Activated B cell treated with CpG ODN at 0.5 μM for 24 hours (primary cell): ENCODE measurements at regions of chrX and their contacts with region 1.

Region 1: GRCh38 chrX:129781134-129781672 is 1.5 kb downstream of the SASH3 start:
- DNase-seq: peak; percentile 49
- ATAC-seq: peak; percentile 73
- H3K4me3 Mint-ChIP-seq: peak overlapping the region; percentile 93
- H3K27ac Mint-ChIP-seq: peak overlapping the region; percentile 96
- H3K4me1 Mint-ChIP-seq: peaks cover 76% of the 10 kb centered on the region
- H3K27me3 Mint-ChIP-seq: no peaks in the 10 kb centered on the region
- CTCF ChIP-seq: no peak

Region 2: DNA sequence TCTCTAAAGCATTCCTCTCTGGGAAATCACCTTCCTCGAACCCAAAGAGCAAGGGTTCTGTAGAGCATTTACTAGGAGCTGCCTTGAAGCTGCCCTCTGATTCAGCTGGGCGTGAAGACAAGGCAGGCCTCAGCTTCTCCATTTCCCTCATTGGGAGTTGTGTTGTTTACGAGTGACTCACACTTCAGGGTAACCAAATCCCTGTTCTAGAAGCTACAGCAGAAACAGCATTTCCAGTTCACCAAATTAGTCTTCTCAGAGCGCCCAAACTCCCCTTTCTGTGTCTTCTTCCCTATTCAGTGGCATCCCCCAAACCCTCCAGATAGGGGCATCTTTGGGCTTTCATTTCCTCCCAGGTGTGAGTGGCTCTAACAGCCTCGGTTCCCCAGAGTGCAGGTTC is 43.3 kb before region 1 on chrX:
- CTCF ChIA-PET with region 1: interaction called, 3 read pairs
- POLR2A ChIA-PET with region 1: interaction called, 48 read pairs
- intact Hi-C with region 1: loop called (anchors 2 kb)
- DNase-seq: no peak
- ATAC-seq: peak; percentile 79
- H3K4me3 Mint-ChIP-seq: no peak overlapping the region
- H3K27ac Mint-ChIP-seq: peak overlapping the region; percentile 63
- H3K4me1 Mint-ChIP-seq: peaks cover 36% of the 10 kb centered on the region
- H3K27me3 Mint-ChIP-seq: no peaks in the 10 kb centered on the region
- CTCF ChIP-seq: no peak

Region 3: GRCh38 chrX:129759576-129760061 is 21.6 kb before region 1 on chrX:
- CTCF ChIA-PET with region 1: interaction called, 10 read pairs
- POLR2A ChIA-PET with region 1: interaction called, 261 read pairs
- intact Hi-C with region 1: loop called (anchors 1 kb)
- DNase-seq: no peak
- ATAC-seq: peak; percentile 28
- H3K4me3 Mint-ChIP-seq: no peak overlapping the region
- H3K27ac Mint-ChIP-seq: peak overlapping the region; percentile 85
- H3K4me1 Mint-ChIP-seq: peaks cover 58% of the 10 kb centered on the region
- H3K27me3 Mint-ChIP-seq: no peaks in the 10 kb centered on the region
- CTCF ChIP-seq: no peak

Region 4: DNA sequence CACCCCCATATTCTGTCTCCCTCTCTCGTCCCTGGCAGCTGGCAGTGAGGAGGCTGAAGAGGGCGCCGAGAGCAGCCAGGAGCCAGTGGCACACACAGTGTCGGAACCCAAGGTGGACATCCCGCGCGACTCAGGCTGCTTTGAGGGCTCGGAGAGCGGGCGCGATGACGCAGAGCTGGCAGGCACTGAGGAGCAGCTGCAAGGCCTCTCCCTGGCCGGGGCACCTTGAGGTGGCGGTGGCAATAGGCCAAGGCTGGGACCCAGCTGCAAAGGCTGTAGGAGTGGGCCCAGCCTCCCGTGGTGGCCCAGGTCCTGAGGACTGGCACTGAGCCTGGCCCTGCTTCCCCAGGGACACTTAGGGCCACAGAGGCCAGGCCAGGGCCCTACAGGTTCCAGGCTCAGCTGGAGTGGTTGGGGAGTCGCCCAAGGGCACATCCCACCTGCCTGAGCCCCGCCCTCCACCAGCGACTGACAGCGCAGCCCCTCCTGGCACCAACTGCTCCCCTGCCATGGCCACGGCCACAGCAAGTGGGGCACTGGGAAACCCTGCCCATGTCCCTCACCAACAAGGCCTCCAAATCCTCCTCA is 12.5 kb after region 1 on chrX:
- CTCF ChIA-PET with region 1: no interaction called
- POLR2A ChIA-PET with region 1: interaction called, 22 read pairs
- intact Hi-C with region 1: no loop called
- DNase-seq: no peak
- ATAC-seq: no peak
- H3K4me3 Mint-ChIP-seq: no peak overlapping the region
- H3K27ac Mint-ChIP-seq: no peak overlapping the region
- H3K4me1 Mint-ChIP-seq: peaks cover 5% of the 10 kb centered on the region
- H3K27me3 Mint-ChIP-seq: no peaks in the 10 kb centered on the region
- CTCF ChIP-seq: no peak

Region 5: DNA sequence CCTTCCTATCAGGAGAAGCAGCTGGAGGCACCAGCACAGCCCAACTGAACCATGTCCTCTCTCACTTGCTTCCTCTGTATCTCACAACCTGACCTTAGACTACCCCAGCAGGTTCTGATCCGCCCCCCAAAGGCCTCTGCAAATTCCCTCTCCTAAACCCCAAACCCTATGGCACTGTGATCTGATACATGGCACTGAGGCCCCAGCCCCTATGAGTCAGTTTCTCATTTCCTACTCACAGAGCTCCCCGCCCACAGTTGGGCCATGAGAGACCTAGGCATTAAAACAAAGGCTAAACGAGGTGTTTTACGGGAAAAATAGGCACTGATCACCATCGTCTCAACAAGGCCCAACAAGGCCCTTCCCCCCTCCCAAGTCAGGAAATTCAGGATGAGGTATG is 17.7 kb after region 1 on chrX:
- CTCF ChIA-PET with region 1: no interaction called
- POLR2A ChIA-PET with region 1: interaction called, 22 read pairs
- intact Hi-C with region 1: no loop called
- DNase-seq: no peak
- ATAC-seq: no peak
- H3K4me3 Mint-ChIP-seq: no peak overlapping the region
- H3K27ac Mint-ChIP-seq: peak overlapping the region; percentile 41
- H3K4me1 Mint-ChIP-seq: peaks cover 8% of the 10 kb centered on the region
- H3K27me3 Mint-ChIP-seq: no peaks in the 10 kb centered on the region
- CTCF ChIP-seq: no peak

Region 6: GRCh38 chrX:129843459-129844306 is 62.5 kb after region 1 on chrX and contains the start of gene ZDHHC9:
- CTCF ChIA-PET with region 1: no interaction called
- POLR2A ChIA-PET with region 1: no interaction called
- intact Hi-C with region 1: loop called (anchors 5 kb)
- DNase-seq: peak; percentile 74
- ATAC-seq: peak; percentile 99
- H3K4me3 Mint-ChIP-seq: peak within 1 kb of the TSS; percentile 94
- H3K27ac Mint-ChIP-seq: peak within 1 kb of the TSS; percentile 77
- H3K4me1 Mint-ChIP-seq: peaks cover 14% of the 10 kb centered on the region
- H3K27me3 Mint-ChIP-seq: no peaks in the 10 kb centered on the region
- CTCF ChIP-seq: no peak
- total RNA-seq, gene ZDHHC9: 3.9 and 4.2 TPM in 2 replicates

Region 7: DNA sequence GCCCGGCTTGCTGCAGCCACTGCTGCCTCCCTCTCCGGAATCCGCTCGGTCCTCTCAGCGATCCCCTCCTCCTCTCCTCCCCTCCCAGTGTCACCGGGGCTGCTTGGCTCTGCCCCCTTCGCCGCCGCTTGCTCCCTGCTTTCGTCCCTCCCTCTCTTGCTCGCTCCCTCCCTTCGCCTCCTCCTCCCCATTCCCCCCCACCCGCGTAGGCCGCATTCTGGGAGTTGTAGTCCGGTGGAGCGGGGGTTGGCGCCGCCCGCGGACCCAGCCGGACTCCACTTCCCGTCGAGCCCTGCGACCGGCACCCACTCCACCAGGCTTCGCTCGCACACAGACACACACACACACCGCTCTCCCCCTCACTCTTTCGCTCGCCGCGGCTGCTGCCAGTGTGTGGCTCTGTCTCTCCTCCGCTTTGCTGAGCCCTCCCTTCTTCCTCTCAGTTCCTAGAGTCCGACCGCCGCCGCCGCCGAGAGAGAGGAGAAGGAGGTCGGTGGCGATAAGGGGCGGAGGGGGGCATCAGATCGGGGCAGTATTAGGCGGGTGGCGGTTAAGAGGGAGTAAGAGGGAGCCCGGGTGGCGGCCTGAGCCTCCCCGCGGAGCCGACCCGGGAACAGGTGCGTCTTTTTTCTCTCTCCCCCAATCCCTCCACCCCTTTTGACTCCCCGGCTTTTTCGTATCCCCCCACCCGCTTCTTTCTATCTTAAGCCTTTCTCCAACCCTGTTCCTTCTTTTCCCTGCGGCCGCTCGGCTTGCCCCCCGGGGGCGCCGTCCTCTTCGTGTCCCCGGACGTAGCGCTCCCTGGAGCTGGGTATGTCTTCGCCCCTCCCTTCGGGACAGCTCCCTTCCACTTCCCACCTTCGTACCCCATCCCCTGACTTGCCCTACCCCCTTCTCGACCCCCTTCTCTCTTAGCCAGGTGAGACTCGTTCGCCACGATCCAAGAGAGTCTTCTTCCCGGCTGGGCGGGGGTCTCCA is 201.4 kb after region 1 on chrX and contains the start of gene BCORL1:
- CTCF ChIA-PET with region 1: no interaction called
- POLR2A ChIA-PET with region 1: no interaction called
- intact Hi-C with region 1: loop called (anchors 5 kb)
- DNase-seq: peak; percentile 70
- ATAC-seq: peak; percentile 89
- H3K4me3 Mint-ChIP-seq: no peak within 1 kb of the TSS
- H3K27ac Mint-ChIP-seq: peak within 1 kb of the TSS; percentile 68
- H3K4me1 Mint-ChIP-seq: peaks cover 18% of the 10 kb centered on the region
- H3K27me3 Mint-ChIP-seq: no peaks in the 10 kb centered on the region
- CTCF ChIP-seq: no peak
- total RNA-seq, gene BCORL1: 8.0 and 8.2 TPM in 2 replicates